ENCODE measurements at regions of chr11 and their contacts with region 1.

Region 1: DNA sequence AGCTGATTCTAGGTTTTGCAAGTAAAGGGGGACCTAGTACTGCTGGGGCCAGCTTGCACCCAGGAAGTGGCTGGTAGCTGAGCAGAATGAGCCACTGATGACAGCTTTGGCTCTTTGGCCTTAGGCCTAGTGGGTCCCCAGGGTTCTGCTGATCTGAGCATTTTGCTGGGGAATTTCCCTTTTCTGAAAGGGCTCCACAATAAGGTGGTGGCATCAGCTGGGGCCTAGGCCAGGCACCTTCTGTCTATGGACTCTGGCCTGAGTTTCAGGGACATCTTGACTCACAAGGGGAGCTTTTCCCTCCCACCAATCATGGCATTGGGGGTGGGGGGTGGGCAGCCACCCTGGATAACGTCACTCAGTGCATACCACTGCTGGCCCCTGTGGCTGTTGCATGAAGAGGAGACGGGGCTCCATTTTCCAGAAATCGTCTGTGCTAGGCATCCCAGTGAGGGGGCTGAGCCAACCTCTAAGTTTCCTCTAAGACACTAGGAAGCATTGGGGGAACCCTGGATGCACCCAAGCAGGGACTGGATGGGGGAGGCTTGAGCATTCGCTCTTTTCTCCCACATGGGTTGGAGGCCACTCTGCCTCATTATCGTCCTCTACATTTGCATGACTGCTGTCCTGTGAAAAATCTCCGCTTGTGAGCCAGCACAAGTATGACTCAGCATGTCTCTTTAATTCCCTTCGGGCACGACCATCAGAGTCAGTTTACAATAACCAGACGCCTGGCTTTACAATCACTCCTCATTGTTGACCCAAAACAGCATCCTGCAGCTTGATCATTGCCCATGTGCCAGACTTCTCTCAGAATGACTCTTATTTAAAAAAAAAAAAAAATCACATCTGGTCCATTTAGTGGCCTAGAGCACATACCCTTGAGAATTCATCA is 145.0 kb upstream of the THY1 start:
- DNase-seq: no peak
- H3K4me3 ChIP-seq: no peak overlapping the region
- H3K27ac ChIP-seq: no peak overlapping the region
- H3K4me1 ChIP-seq: peaks cover 0 to 8% (median 0%) of the 10 kb centered on the region in 4 experiments; a peak in 4 of 7 replicates
- H3K27me3 ChIP-seq: no peaks in the 10 kb centered on the region; a peak in 1 of 7 replicates
- CTCF ChIP-seq: no peak
- EP300 ChIP-seq: no peak
- POLR2A ChIP-seq: no peak
- RAD21 ChIP-seq: no peak

Region 2: DNA sequence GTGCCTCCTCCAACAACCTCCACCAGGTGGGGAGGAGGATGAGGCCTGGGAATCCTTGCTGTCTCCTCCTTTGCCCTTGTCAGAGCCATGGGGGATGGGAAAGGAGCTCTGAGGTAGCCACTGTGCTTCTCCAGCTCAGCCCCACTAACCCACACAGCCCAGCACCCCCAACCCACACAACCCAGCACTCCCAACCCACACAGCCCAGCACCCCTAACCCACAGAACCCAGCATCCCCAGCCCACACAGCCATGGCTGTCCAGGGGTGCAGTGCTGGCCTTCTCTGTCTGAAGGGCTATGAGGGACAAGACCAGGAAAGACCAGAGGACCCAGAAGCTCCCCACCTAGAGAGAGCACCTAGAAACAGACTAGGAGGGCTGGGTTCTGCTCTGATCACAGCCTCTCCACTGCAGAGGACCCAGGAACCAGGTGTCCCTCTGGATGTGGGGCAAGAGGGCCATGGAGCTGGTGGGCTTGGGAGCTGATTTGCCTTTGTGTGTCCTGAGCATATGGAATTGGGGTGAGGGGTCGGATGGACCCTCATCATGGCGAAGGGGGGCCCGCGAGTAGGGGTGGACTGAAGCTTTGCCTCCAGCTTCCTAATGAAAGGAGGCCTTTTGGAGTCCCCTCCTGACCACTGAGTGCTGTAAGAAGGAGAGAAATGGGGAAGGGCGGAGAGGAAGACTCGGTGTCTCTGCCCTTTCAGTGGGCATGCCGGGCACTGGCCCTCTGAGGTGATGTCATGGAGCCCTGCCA is 27.4 kb before region 1 on chr11:
- CTCF ChIA-PET with region 1: interaction called, 23 read pairs
- POLR2A ChIA-PET with region 1: no interaction called
- DNase-seq: peak in 1 of 2 experiments; percentile 28
- H3K4me3 ChIP-seq: no peak overlapping the region
- H3K27ac ChIP-seq: no peak overlapping the region
- H3K4me1 ChIP-seq: no peaks in the 10 kb centered on the region
- H3K27me3 ChIP-seq: peaks cover 0 to 3% (median 0%) of the 10 kb centered on the region in 4 experiments; a peak in 1 of 7 replicates
- CTCF ChIP-seq: no peak
- EP300 ChIP-seq: no peak
- POLR2A ChIP-seq: no peak
- RAD21 ChIP-seq: no peak

Region 3: GRCh38 chr11:119584193-119585037 is 16.5 kb after region 1 on chr11:
- CTCF ChIA-PET with region 1: interaction called, 59 read pairs
- POLR2A ChIA-PET with region 1: interaction called, 23 read pairs
- DNase-seq: peak; percentile 70 to 79
- H3K4me3 ChIP-seq: peak overlapping the region; percentile 59 to 69 (median 64)
- H3K27ac ChIP-seq: no peak overlapping the region
- H3K4me1 ChIP-seq: peaks cover 0 to 13% (median 7%) of the 10 kb centered on the region in 4 experiments; a peak in 6 of 7 replicates
- H3K27me3 ChIP-seq: peaks cover 0 to 18% (median 7%) of the 10 kb centered on the region in 4 experiments; a peak in 4 of 7 replicates
- CTCF ChIP-seq: no peak
- EP300 ChIP-seq: peak in 1 of 2 experiments; percentile 47; a peak in 1 of 3 replicates
- POLR2A ChIP-seq: peak in 1 of 2 experiments; percentile 76; a peak in 2 of 3 replicates
- RAD21 ChIP-seq: no peak

Region 4: GRCh38 chr11:119599864-119600541 is 32.1 kb after region 1 on chr11:
- CTCF ChIA-PET with region 1: interaction called, 36 read pairs
- POLR2A ChIA-PET with region 1: no interaction called
- DNase-seq: no peak
- H3K4me3 ChIP-seq: no peak overlapping the region
- H3K27ac ChIP-seq: no peak overlapping the region
- H3K4me1 ChIP-seq: peaks cover 0 to 7% (median 3%) of the 10 kb centered on the region in 4 experiments; a peak in 2 of 7 replicates
- H3K27me3 ChIP-seq: peaks cover 0 to 5% (median 0%) of the 10 kb centered on the region in 4 experiments; a peak in 2 of 7 replicates
- CTCF ChIP-seq: no peak
- EP300 ChIP-seq: no peak
- POLR2A ChIP-seq: no peak
- RAD21 ChIP-seq: no peak

Region 5: DNA sequence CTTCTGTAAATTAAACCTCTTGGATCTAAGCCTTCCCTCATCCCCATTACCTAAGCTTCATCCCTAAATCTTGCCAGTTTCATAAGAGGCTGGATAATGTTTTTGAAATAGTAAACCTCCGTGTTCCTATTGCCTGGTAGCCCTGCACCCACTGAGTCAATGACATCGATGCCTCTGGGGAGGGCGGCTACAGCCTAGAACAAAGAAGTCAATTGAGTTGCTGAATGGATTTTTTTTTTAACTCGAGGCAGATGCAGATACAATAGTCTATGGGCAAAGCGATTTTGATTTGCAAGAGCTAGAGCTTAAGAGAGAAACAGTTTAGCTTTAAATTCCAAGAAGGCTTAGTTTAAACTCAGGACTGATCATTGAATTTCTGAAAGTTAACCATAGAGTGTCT is 39.8 kb after region 1 on chr11:
- CTCF ChIA-PET with region 1: interaction called, 36 read pairs
- POLR2A ChIA-PET with region 1: no interaction called
- DNase-seq: no peak
- H3K4me3 ChIP-seq: no peak overlapping the region
- H3K27ac ChIP-seq: no peak overlapping the region
- H3K4me1 ChIP-seq: peaks cover 0 to 15% (median 6%) of the 10 kb centered on the region in 4 experiments; a peak in 5 of 7 replicates
- H3K27me3 ChIP-seq: peaks cover 0 to 8% (median 0%) of the 10 kb centered on the region in 4 experiments; a peak in 4 of 7 replicates
- CTCF ChIP-seq: no peak
- EP300 ChIP-seq: no peak
- POLR2A ChIP-seq: no peak
- RAD21 ChIP-seq: no peak

Region 6: DNA sequence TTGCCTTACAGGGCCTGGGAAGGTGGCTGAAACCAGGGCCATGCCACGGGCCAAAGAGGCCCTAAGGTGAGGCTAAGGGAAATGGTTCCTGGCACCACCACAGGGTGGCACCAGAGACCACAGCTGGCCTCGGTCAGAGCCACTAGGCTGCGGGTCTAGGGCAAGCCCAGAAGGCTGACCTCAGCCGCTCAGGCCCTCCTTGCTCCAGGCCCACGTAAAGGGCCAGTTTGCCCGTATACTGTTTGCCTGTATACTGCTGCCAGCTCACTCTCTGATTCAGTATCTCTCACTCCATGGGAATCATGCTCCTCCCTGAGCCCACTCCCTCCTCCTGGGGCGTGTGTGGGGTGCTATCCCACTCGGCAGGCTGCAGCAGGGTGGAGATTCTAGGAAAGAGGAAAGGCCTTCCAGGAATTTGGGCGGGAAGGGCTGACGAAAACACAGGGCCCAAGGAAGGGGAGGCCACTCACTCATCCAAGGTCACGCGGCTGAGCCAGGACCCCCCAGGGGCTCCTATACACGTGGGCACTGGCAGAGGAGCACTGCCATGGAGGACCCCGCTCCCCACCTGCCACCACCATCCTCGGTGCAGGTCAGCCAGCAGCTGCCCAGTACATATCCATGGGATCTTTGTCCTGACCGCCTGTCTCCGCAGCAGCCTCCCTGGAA is 98.7 kb after region 1 on chr11:
- CTCF ChIA-PET with region 1: no interaction called
- POLR2A ChIA-PET with region 1: no interaction called
- DNase-seq: peak; percentile 69 to 92
- H3K4me3 ChIP-seq: no peak overlapping the region
- H3K27ac ChIP-seq: no peak overlapping the region
- H3K4me1 ChIP-seq: peaks cover 2 to 19% (median 15%) of the 10 kb centered on the region in 4 experiments; a peak in 6 of 7 replicates
- H3K27me3 ChIP-seq: no peaks in the 10 kb centered on the region
- CTCF ChIP-seq: peak; percentile 92 to 99 (median 96)
- EP300 ChIP-seq: no peak
- POLR2A ChIP-seq: no peak
- RAD21 ChIP-seq: peak; percentile 99